ENCODE measurements at regions of chr5 and their contacts with region 1.

Region 1: GRCh38 chr5:148730943-148731861 is 76.9 kb upstream of the HTR4 start:
- DNase-seq: peak; percentile 72
- H3K4me3 ChIP-seq: no peak overlapping the region; the same call in 1 of the 2 replicates
- H3K27ac ChIP-seq: no peak overlapping the region
- H3K27me3 ChIP-seq: peaks cover 3% of the 10 kb centered on the region
- CTCF ChIP-seq: peak; percentile 84

Region 2: GRCh38 chr5:148191010-148191409 is 540.2 kb before region 1 on chr5:
- CTCF ChIA-PET with region 1: interaction called, 10 read pairs
- POLR2A ChIA-PET with region 1: no interaction called
- DNase-seq: no peak
- H3K4me3 ChIP-seq: no peak overlapping the region
- H3K27ac ChIP-seq: no peak overlapping the region
- H3K27me3 ChIP-seq: no peaks in the 10 kb centered on the region
- CTCF ChIP-seq: no peak

Region 3: DNA sequence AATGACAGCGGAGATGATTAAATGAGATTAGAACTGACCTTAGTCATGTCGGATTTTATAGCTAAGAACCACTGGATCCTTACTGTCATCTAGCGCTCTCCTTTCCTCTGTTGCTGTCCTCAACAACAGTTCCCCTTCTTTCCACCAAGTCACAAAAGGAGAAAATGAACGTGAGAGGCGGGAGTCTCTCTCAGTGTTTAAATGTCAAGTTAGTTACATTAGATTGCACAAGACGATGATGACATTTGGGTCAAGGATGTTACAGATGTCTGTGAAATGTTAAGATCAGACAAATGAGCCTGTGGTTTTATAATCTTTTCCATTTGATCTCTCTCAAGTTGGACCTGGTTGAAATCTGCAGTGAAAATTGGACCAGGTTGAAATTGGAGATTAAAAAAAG is 294.0 kb before region 1 on chr5:
- CTCF ChIA-PET with region 1: interaction called, 380 read pairs
- POLR2A ChIA-PET with region 1: no interaction called
- DNase-seq: no peak
- H3K4me3 ChIP-seq: no peak overlapping the region
- H3K27ac ChIP-seq: no peak overlapping the region
- H3K27me3 ChIP-seq: no peaks in the 10 kb centered on the region
- CTCF ChIP-seq: no peak

Region 4: GRCh38 chr5:148615644-148616275 is 115.4 kb before region 1 on chr5:
- CTCF ChIA-PET with region 1: no interaction called
- POLR2A ChIA-PET with region 1: no interaction called
- DNase-seq: no peak
- H3K4me3 ChIP-seq: no peak overlapping the region
- H3K27ac ChIP-seq: no peak overlapping the region
- H3K27me3 ChIP-seq: no peaks in the 10 kb centered on the region
- CTCF ChIP-seq: no peak

Region 5: GRCh38 chr5:148746826-148747535 is 15.8 kb after region 1 on chr5:
- CTCF ChIA-PET with region 1: interaction called, 88 read pairs
- POLR2A ChIA-PET with region 1: no interaction called
- DNase-seq: no peak
- H3K4me3 ChIP-seq: no peak overlapping the region
- H3K27ac ChIP-seq: no peak overlapping the region
- H3K27me3 ChIP-seq: no peaks in the 10 kb centered on the region
- CTCF ChIP-seq: no peak

Region 6: DNA sequence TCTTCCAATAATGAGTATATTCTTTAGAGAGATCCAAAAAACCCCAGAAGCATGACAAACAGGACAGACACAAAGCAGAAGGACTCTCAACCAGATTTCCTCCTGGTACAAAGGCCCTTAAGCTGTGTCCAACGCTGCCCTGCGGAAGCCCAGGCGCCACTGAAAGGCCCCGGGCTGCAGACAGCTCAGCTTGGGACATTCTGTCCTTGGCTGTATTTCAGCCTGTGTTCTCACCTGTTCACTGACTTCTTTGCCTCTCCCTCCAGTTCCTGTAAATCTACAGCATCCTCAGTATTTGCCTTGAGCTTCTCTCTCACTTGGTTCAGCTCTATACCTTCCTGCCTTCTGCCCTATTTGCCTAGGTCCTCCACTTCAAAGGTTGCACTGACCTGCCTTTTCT is 235.1 kb after region 1 on chr5:
- CTCF ChIA-PET with region 1: interaction called, 142 read pairs
- POLR2A ChIA-PET with region 1: no interaction called
- DNase-seq: no peak
- H3K4me3 ChIP-seq: no peak overlapping the region
- H3K27ac ChIP-seq: peak overlapping the region; percentile 12
- H3K27me3 ChIP-seq: no peaks in the 10 kb centered on the region
- CTCF ChIP-seq: no peak

Region 7: DNA sequence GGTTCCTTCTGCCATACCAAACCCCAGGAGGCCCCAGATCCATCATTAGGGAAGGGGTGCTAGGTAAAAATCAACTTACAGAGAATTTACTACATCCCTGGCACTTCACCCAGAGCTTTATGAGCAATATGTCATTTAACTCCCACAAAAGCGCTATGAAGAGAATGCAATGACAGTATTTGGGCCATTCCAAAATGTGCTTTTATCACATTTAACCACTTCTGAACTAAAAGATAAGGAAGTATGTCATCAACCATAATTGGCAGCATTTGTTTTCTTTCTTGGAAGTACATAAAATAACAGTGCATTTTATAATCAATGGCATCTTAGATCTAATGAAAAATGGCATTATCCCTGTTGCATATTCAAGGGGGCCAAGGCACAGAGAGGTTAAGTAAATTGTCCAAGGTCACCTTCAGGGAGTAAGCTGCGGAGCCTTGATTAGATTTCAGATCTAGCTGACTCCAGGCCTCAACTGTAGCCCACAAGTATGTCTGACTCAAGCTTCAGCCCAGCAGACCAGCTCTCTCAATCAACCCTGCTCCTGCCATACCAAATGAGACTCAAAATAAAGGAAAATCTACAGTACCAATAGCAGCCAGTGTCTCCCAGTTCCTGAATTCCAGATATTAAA is 315.1 kb after region 1 on chr5:
- CTCF ChIA-PET with region 1: interaction called, 21 read pairs
- POLR2A ChIA-PET with region 1: no interaction called
- DNase-seq: no peak
- H3K4me3 ChIP-seq: no peak overlapping the region
- H3K27ac ChIP-seq: no peak overlapping the region
- H3K27me3 ChIP-seq: no peaks in the 10 kb centered on the region
- CTCF ChIP-seq: no peak

Measured in AG04450 (cell line).